ENCODE measurements at regions of chr2 and their contacts with region 1.

Region 1: GRCh38 chr2:113080134-113080533 is 12.4 kb downstream of the IL1F10 start:
- DNase-seq: no peak
- ATAC-seq: no peak
- H3K4me3 ChIP-seq: no peak overlapping the region
- H3K27ac ChIP-seq: no peak overlapping the region
- H3K4me1 ChIP-seq: peaks cover 0 to 9% (median 0%) of the 10 kb centered on the region in 9 donors
- H3K27me3 ChIP-seq: peaks cover 0 to 17% (median 0%) of the 10 kb centered on the region in 7 donors
- CTCF ChIP-seq: peak in 7 of 9 donors; percentile 47 to 76 (median 49)

Region 2: DNA sequence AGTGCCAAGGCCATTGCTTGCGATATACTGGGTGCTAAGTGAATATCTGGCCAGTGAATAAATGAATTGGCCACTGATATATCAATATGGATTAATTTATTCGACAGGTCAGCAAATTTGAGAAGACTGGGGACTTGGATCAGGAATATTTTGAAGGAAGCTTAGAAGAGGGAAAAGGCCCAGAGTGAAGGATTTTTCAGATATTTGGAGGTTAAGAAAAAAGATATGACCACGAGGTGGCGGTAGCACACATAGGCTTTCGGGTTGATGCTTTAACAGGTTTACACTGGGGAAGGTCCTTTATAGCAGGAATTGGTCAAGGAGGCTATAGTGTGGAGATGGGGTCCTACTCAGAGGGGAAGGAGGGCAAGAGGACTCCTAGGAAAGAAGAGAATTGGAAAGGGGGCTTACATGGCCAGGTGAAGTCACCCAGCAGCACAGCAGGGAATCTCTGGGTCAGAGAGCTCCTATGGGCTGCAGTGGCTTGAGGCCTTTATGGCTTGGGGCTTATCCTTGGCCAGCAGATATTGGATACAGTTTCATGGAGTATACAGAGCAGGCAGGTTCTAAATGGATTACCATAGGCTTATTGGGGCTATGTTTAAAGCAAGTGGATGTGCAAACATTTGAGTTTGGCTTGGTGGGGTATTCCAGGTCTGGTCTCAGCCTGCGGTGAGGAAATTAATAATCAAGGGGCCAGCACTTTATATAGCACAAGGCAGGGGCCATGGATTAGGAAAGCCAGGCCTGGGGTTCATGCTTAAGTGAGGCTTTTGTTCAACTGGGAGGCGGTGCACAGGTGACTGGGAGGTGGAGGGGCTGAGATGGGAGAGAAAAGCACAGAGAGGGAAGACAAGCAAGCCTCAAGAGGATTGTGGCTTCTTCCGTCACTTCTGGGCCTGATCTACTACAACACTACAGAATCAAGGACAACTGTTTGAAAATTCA is 57.0 kb after region 1 on chr2:
- intact Hi-C with region 1: no loop called
- DNase-seq: no peak
- ATAC-seq: peak in 4 of 8 donors; percentile 31 to 56 (median 36)
- H3K4me3 ChIP-seq: no peak overlapping the region
- H3K27ac ChIP-seq: no peak overlapping the region
- H3K4me1 ChIP-seq: peaks cover 0 to 6% (median 0%) of the 10 kb centered on the region in 9 donors
- H3K27me3 ChIP-seq: peaks cover 0 to 5% (median 0%) of the 10 kb centered on the region in 7 donors
- CTCF ChIP-seq: peak; percentile 18 to 67 (median 52)

Region 3: GRCh38 chr2:113181258-113182051 is 101.3 kb after region 1 on chr2:
- intact Hi-C with region 1: loop called in 1 of 10 experiments (anchors 10 kb)
- DNase-seq: no peak
- ATAC-seq: peak in 4 of 8 donors; percentile 8 to 51 (median 38)
- H3K4me3 ChIP-seq: no peak overlapping the region
- H3K27ac ChIP-seq: peak overlapping the region in 1 of 10 donors; percentile 56
- H3K4me1 ChIP-seq: peaks cover 0 to 69% (median 0%) of the 10 kb centered on the region in 9 donors
- H3K27me3 ChIP-seq: peaks cover 0 to 3% (median 0%) of the 10 kb centered on the region in 7 donors
- CTCF ChIP-seq: no peak

Region 4: DNA sequence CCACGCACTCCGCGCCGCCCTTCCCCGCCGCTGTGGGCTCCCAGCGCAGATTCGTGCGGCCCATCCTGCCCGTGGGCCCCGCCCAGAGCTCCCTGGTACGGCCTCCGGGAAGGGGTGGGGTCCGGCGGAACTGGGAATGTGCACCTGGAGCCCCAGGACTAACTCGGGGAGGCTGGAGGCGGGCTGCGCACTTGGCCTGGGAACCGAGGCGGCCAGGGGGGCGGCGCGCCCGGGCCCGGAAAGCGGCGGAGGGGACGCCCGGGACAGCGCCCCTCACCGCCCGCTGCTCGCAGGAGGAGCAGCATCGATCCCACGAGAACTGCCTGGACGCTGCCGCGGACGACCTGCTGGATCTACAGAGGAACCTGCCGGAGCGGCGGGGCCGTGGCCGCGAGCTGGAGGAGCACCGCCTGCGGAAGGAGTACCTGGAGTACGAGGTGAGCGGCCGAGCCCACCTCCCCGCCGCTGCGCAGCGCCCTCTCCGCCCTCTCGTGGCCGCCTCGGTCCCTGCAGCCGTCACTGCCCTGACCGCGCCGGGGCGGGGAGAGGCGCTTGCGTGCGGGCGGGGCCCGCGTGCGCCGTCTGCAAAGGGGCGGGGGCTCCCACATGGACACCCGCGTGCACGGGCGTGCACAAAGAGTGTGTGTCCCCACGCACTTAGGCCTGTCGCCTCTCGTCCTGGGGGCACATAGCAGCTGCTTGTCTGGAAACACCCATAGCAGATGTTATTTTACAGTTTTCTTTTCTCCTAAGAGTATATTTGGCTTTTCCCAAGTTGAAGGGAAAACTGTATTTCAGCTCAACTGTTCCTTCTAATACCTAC is 118.9 kb after region 1 on chr2:
- intact Hi-C with region 1: loop called in 4 of 10 experiments (anchors 1 to 5 kb)
- DNase-seq: peak; percentile 63 to 84
- ATAC-seq: peak; percentile 83 to 95 (median 90)
- H3K4me3 ChIP-seq: peak overlapping the region; percentile 57 to 90 (median 82)
- H3K27ac ChIP-seq: peak overlapping the region in 7 of 10 donors; percentile 3 to 81 (median 46)
- H3K4me1 ChIP-seq: peaks cover 0 to 17% (median 8%) of the 10 kb centered on the region in 9 donors
- H3K27me3 ChIP-seq: no peaks in the 10 kb centered on the region
- CTCF ChIP-seq: peak; percentile 82 to 99 (median 97)

Measured in heart right ventricle (tissue), 16 donors.